ENCODE measurements at regions of chr7 and their contacts with region 1.

Region 1: GRCh38 chr7:13386741-13387140 is 602.7 kb downstream of the ETV1 start:
- DNase-seq: no peak
- H3K4me3 ChIP-seq: no peak overlapping the region
- H3K27ac ChIP-seq: no peak overlapping the region
- H3K4me1 ChIP-seq: no peaks in the 10 kb centered on the region
- H3K27me3 ChIP-seq: no peaks in the 10 kb centered on the region
- CTCF ChIP-seq: no peak
- POLR2A ChIP-seq: no peak

Region 2: DNA sequence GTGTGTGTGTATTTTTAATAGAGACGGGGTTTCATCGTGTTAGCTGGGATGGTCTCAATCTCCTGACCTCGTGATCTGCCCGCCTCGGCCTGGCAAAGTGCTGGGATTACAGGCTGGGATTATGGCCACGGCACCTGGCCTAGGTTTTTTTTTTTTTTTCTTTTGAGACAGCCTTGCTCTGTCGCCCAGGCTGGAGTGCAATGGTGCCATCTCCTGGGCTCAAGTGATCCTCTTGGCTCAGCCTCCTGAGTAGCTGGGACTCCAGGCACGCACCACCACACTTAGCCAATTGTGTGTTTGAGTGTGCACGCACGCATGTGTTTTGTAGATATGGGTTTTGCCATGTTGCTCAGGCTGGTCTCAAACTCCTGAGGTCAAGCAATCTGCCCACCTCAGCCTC is 27.1 kb before region 1 on chr7:
- CTCF ChIA-PET with region 1: no interaction called
- POLR2A ChIA-PET with region 1: no interaction called
- dilution Hi-C with region 1: no loop called
- intact Hi-C with region 1: loop called (anchors 1 kb)
- DNase-seq: no peak
- H3K4me3 ChIP-seq: no peak overlapping the region
- H3K27ac ChIP-seq: no peak overlapping the region
- H3K4me1 ChIP-seq: no peaks in the 10 kb centered on the region
- H3K27me3 ChIP-seq: no peaks in the 10 kb centered on the region
- CTCF ChIP-seq: no peak
- POLR2A ChIP-seq: no peak

Region 3: GRCh38 chr7:13532028-13532753 is 145.4 kb after region 1 on chr7:
- CTCF ChIA-PET with region 1: no interaction called
- POLR2A ChIA-PET with region 1: no interaction called
- dilution Hi-C with region 1: no loop called
- intact Hi-C with region 1: no loop called
- DNase-seq: no peak
- H3K4me3 ChIP-seq: no peak overlapping the region
- H3K27ac ChIP-seq: no peak overlapping the region
- H3K4me1 ChIP-seq: no peaks in the 10 kb centered on the region
- H3K27me3 ChIP-seq: no peaks in the 10 kb centered on the region
- CTCF ChIP-seq: no peak
- POLR2A ChIP-seq: no peak